ENCODE measurements at regions of chr7 and their contacts with region 1.

Region 1: DNA sequence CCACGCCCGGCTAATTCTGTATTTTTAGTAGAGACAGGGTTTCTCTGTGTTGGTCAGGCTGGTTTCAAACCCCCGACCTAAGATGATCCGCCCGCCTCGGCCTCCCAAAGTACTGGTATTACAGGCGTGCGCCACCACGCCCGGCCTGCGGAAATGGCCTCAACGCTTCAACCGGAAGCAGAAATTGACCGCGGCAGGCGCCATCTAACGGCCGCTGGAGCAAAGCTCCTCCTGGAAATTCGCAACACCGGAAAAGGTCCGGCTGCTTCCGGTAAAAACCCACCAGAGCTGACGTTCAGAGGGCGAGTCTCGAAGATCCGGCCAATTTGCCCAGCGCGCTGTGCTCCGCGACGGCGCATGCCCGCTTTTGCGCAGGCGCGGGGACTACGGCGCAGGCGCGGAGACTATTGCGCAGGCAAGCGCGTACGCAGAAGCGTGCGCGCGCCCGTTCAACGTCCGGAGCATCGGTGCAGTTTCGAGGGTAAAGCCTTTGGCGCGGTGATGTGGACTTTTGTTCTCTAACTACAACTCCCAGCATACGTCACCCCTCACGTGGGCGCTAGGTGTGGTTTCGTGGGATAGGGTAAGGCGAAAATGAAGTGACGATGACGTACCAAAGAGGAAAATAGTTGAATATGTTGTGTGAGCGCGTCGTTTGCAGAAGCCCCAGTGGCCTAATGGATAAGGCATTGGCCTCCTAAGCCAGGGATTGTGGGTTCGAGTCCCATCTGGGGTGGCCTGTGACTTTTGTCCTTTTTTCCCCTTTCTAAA is 915 bp upstream of the FMC1 start:
- DNase-seq: peak; percentile 98 to 99 (median 98)
- ATAC-seq: peak; percentile 87 to 90 (median 90)
- H3K4me3 ChIP-seq: peak overlapping the region; percentile 63 to 88 (median 84)
- H3K27ac ChIP-seq: peak overlapping the region; percentile 96 to 100 (median 99)
- H3K4me1 ChIP-seq: peaks cover 0 to 23% (median 10%) of the 10 kb centered on the region in 12 donors
- H3K27me3 ChIP-seq: no peaks in the 10 kb centered on the region
- CTCF ChIP-seq: peak; percentile 64 to 92 (median 80)
- POLR2A ChIP-seq: peak in 1 of 2 donors; percentile 54

Region 2: DNA sequence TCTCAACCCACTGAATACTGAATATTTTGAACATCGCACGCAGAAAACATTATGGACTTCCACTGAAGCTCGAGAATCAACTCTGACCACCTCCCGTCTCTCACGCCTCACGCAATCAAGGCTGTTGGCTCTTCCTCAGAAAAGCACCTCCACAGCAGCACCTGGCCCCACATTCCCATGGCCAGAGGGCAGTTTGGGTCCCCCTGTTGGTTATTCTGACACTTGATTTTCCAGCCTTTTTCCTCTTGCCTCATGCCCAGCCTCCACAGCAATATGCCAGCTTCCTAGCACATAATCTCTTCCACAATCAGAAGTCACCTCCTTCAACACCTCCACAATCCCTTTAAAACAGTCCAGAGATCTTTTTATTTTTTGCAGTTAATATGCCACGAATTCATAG is 694.9 kb before region 1 on chr7:
- intact Hi-C with region 1: no loop called
- DNase-seq: no peak
- ATAC-seq: no peak
- H3K4me3 ChIP-seq: no peak overlapping the region
- H3K27ac ChIP-seq: no peak overlapping the region
- H3K4me1 ChIP-seq: no peaks in the 10 kb centered on the region
- H3K27me3 ChIP-seq: no peaks in the 10 kb centered on the region
- CTCF ChIP-seq: no peak
- POLR2A ChIP-seq: no peak

Region 3: DNA sequence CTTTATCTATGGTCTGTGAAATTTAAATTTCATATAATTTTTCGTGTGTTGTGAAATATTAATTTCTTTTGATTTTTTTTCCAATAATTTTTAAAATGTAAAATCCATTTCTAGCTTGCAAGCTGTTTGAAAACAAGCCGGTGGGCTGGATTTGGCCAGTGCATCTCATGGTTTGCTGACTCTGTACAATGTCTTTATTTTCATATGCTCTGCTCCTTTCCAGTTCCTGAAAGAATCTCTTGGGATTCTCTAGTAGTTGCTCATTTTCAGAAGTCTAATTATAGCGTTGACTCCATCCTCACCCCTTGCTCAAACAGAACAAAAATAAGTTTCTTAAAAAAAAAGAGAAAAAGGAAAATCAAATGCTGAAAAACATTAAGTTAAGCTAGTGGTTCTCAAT is 87.8 kb before region 1 on chr7:
- intact Hi-C with region 1: no loop called
- DNase-seq: no peak
- ATAC-seq: no peak
- H3K4me3 ChIP-seq: no peak overlapping the region
- H3K27ac ChIP-seq: no peak overlapping the region
- H3K4me1 ChIP-seq: peaks cover 0 to 8% (median 0%) of the 10 kb centered on the region in 12 donors
- H3K27me3 ChIP-seq: no peaks in the 10 kb centered on the region
- CTCF ChIP-seq: no peak
- POLR2A ChIP-seq: no peak

Region 4: DNA sequence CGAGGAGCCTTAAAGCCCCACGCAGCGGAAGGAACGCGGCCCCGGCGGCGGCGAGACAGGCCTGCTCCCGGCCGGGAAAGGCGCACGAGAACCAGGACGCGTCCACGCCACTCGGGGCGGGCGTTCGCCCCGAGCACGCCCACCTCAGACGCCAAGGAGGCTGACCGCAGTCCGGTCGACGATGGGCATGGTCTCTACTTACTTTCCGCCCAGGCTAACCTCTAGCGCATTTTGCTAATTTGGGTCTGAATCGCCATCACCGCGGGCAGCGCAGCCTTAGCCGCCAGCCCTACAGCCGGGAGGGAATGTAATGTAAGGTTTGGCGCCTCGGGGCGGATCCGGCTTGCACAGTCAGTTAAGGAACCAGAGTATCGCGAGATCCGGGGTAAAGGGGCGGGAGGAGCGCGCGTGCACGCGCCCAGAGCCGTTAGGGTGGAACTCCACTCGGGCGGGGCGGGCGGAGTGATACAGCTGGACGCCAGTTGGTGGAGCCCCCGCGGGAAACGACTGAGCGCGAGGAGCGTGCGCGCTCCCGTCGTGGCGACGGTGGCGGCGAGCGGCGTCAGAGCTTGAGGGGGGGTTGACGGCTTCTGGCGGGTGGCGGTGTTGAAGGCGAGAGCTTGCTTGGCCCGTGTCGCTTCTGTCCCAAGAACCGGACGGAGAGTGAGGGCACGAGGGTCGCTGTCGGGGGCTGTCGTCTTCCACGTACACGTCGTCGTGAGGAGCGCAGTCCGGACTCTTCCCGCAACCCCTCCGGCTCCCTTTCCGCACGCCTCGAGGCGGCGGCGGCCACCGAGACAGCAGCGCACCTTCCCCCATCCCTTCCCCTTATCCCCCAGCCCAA is 19.4 kb after region 1 on chr7 and contains the start of gene LUC7L2:
- intact Hi-C with region 1: loop called (anchors 1 to 2 kb)
- DNase-seq: peak; percentile 100
- ATAC-seq: peak; percentile 96 to 97 (median 96)
- H3K4me3 ChIP-seq: peak within 1 kb of the TSS; percentile 79 to 100 (median 92)
- H3K27ac ChIP-seq: peak within 1 kb of the TSS; percentile 95 to 100 (median 99)
- H3K4me1 ChIP-seq: peaks cover 5 to 47% (median 32%) of the 10 kb centered on the region in 12 donors
- H3K27me3 ChIP-seq: no peaks in the 10 kb centered on the region
- CTCF ChIP-seq: peak in 5 of 12 donors; percentile 5 to 32 (median 7)
- POLR2A ChIP-seq: peak; percentile 24 to 85
- total RNA-seq, gene LUC7L2: 29.4 to 55.4 (median 46.3) TPM

Measured in heart left ventricle (tissue), 16 donors.